Left cardiac atrium (tissue), 4 donors: ENCODE measurements at regions of chr9 and their contacts with region 1.

Region 1: GRCh38 chr9:84129529-84130141 is 149.0 kb downstream of the RMI1 start:
- DNase-seq: no peak
- ATAC-seq: no peak

Region 2: GRCh38 chr9:84054341-84055010 is 75.2 kb before region 1 on chr9:
- intact Hi-C with region 1: no loop called
- DNase-seq: no peak
- ATAC-seq: peak; percentile 65 to 86

Region 3: GRCh38 chr9:84079994-84080393 is 49.6 kb before region 1 on chr9:
- intact Hi-C with region 1: loop called in 1 of 2 experiments (anchors 5 kb)
- DNase-seq: no peak
- ATAC-seq: no peak